ENCODE measurements at regions of chr9 and their contacts with region 1.

Region 1: DNA sequence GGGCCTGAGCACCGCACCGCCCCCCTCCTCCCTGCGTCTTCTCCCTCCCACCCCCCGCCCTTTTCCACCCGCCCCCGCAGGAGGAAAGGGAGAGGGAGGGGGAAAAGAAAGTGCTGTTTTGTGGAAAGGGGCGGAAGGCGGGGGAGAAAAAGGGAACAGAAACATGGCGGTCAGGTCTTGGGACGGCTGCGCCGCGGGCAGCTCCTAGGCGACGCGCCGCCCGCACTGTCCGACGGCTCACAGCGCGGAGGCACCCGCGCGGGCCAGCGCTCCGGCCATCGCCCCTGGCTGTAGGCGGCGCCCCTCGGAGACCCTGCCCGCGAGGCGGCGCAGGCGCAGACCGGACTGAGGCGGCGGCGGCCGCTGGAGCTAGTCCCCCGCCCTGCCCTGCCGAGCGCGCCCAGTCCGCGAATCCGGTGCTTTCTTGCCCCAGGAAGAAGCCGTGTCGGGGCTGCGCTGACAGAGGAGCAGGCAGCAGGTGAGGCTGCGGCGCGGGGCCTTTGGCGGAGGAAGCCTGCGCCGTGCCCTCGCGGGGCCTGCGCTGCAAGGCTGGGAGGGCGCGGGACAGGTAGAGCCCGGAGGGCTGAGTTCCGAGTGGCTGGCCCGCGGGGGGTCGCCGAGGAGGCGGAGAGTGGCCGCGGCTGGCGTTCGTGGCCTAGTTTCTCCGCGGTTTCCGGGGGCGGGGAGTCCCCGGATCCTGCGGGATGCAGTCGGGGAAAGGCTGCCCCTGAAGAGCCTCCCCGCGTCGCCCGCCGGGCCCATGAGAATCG is at the start of gene DENND4C:
- DNase-seq: peak; percentile 91
- total RNA-seq, gene DENND4C: 21.4 TPM

Region 2: GRCh38 chr9:19127881-19128500 is 102.5 kb before region 1 on chr9:
- intact Hi-C with region 1: loop called (anchors 5 kb)
- DNase-seq: no peak

Region 3: DNA sequence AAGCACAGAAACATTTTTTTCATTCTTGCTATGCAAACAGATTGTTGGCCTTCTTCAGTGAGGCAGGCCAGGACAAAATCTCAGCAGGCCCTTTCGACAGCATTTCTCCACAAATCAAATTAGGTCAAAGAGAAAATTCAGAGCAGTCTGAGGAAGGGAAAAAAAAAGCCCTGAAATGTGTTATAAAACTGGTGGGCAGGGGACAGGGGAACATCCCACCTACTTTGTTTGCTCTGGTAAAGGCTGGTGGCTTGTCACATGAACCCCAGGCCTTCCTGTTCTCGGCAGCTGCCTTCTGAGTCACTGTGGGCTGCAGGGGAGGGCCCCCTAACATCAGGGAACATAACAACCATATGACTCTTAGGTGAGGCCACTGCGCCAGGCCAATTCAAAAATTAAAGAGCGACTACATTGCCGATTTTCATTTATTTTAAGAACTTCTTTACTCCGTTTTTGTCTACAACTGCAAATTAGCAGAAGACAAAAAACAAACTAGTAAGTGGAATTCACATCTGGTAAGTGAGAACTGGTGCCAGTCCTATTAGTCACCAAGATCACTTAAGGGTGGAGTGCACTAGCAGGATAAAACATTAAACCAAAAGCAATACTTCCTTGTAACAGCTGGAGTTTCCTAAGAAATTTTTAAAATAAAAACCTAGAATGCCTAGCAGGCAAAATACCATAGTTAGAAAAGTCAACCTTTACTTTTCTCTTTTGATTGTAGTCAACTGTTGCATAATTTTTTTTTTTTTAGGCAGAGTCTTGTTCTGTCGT is 46.2 kb before region 1 on chr9:
- intact Hi-C with region 1: loop called (anchors 2 kb)
- DNase-seq: peak; percentile 84

Region 4: DNA sequence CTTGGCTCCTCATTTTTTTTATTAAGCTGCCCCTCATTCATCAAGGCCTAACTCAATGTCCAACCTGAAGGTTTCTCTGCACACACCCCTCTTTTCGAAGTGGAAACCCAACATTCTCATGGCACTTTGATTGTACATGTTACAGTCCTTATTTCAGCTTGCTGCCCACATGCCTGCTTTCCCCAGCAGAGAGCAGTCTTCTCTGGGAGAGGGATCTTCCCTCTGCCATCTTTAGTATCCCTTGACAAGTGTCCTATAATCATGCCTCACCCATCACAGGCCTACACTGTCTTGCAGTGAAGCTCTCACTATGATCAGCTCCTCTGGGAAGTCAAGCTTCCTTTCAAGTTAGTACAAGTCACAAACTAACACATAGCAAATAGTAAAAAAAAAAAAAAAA is 353.3 kb after region 1 on chr9:
- intact Hi-C with region 1: no loop called
- DNase-seq: no peak